GM12878 (cell line): ENCODE measurements at regions of chr3 and their contacts with region 1.

Region 1: GRCh38 chr3:49406571-49407566 is 4.9 kb downstream of the RHOA start:
- DNase-seq: no peak
- ATAC-seq: no peak
- H3K4me3 ChIP-seq: peak overlapping the region; percentile 29
- H3K27ac ChIP-seq: no peak overlapping the region
- H3K4me1 ChIP-seq: 0 out of 2 replicates have a peak, but pooled peaks cover 3% of the 10 kb centered on the region
- H3K27me3 ChIP-seq: no peaks in the 10 kb centered on the region
- CTCF ChIP-seq: no peak
- EP300 ChIP-seq: no peak
- POLR2A ChIP-seq: no peak
- RAD21 ChIP-seq: no peak

Region 2: GRCh38 chr3:49358217-49358883 is 48.5 kb before region 1 on chr3 and contains the start of gene GPX1:
- CTCF ChIA-PET with region 1: interaction called, 3 read pairs
- POLR2A ChIA-PET with region 1: interaction called, 6 read pairs
- RAD21 ChIA-PET with region 1: interaction called, 7 read pairs
- SMC1A ChIA-PET with region 1: interaction called, 7 read pairs
- in situ Hi-C with region 1: no loop called
- intact Hi-C with region 1: loop called (anchors 5 kb)
- DNase-seq: peak; percentile 70
- ATAC-seq: peak; percentile 93
- H3K4me3 ChIP-seq: peak within 1 kb of the TSS; percentile 98
- H3K27ac ChIP-seq: peak within 1 kb of the TSS; percentile 96
- H3K4me1 ChIP-seq: peaks cover 11% of the 10 kb centered on the region
- H3K27me3 ChIP-seq: no peaks in the 10 kb centered on the region
- CTCF ChIP-seq: no peak
- EP300 ChIP-seq: no peak
- POLR2A ChIP-seq: peak; percentile 79
- RAD21 ChIP-seq: no peak
- polyA plus RNA-seq, gene GPX1: 32.0 to 174 TPM

Region 3: GRCh38 chr3:49539659-49540560 is 133.0 kb after region 1 on chr3:
- CTCF ChIA-PET with region 1: no interaction called
- POLR2A ChIA-PET with region 1: no interaction called
- RAD21 ChIA-PET with region 1: no interaction called
- SMC1A ChIA-PET with region 1: no interaction called
- in situ Hi-C with region 1: no loop called
- intact Hi-C with region 1: no loop called
- DNase-seq: peak; percentile 45
- ATAC-seq: peak; percentile 98
- H3K4me3 ChIP-seq: peak overlapping the region; percentile 50; the same call in 1 of the 2 replicates
- H3K27ac ChIP-seq: no peak overlapping the region
- H3K4me1 ChIP-seq: peaks cover 5% of the 10 kb centered on the region; the same call in 1 of the 2 replicates
- H3K27me3 ChIP-seq: no peaks in the 10 kb centered on the region; a peak in 1 of 4 replicates
- CTCF ChIP-seq: peak; percentile 83 to 97 (median 93); a peak in 5 of 6 replicates
- EP300 ChIP-seq: no peak
- POLR2A ChIP-seq: 0 out of 2 replicates have a peak, but pooled peaks have one; percentile 36
- RAD21 ChIP-seq: peak; percentile 94

Region 4: GRCh38 chr3:49553692-49554632 is 147.1 kb after region 1 on chr3 and contains the start of gene BSN:
- CTCF ChIA-PET with region 1: no interaction called
- POLR2A ChIA-PET with region 1: no interaction called
- RAD21 ChIA-PET with region 1: no interaction called
- SMC1A ChIA-PET with region 1: no interaction called
- in situ Hi-C with region 1: no loop called
- intact Hi-C with region 1: no loop called
- DNase-seq: peak; percentile 42
- ATAC-seq: peak; percentile 96
- H3K4me3 ChIP-seq: peak within 1 kb of the TSS; percentile 59
- H3K27ac ChIP-seq: no peak within 1 kb of the TSS
- H3K4me1 ChIP-seq: peaks cover 5% of the 10 kb centered on the region
- H3K27me3 ChIP-seq: peaks cover 4 to 9% of the 10 kb centered on the region in 2 experiments
- CTCF ChIP-seq: no peak
- EP300 ChIP-seq: no peak
- POLR2A ChIP-seq: no peak
- RAD21 ChIP-seq: no peak
- polyA plus RNA-seq, gene BSN: under 0.01 TPM in 1 of 2 experiments, not detected in the other

Region 5: GRCh38 chr3:49786241-49786958 is 379.5 kb after region 1 on chr3 and contains the start of gene IP6K1:
- CTCF ChIA-PET with region 1: no interaction called
- POLR2A ChIA-PET with region 1: no interaction called
- RAD21 ChIA-PET with region 1: no interaction called
- SMC1A ChIA-PET with region 1: no interaction called
- in situ Hi-C with region 1: no loop called
- intact Hi-C with region 1: no loop called
- DNase-seq: peak; percentile 99
- ATAC-seq: peak; percentile 99
- H3K4me3 ChIP-seq: peak within 1 kb of the TSS; percentile 96
- H3K27ac ChIP-seq: peak within 1 kb of the TSS; percentile 62
- H3K4me1 ChIP-seq: peaks cover 9% of the 10 kb centered on the region
- H3K27me3 ChIP-seq: no peaks in the 10 kb centered on the region
- CTCF ChIP-seq: no peak
- EP300 ChIP-seq: no peak
- POLR2A ChIP-seq: peak; percentile 96
- RAD21 ChIP-seq: no peak
- polyA plus RNA-seq, gene IP6K1: 1.3 to 2.0 TPM